ENCODE measurements at regions of chr1 and their contacts with region 1.

Region 1: GRCh38 chr1:28412731-28413130 is 43.2 kb downstream of the PHACTR4 start:
- DNase-seq: no peak
- ATAC-seq: no peak

Region 2: DNA sequence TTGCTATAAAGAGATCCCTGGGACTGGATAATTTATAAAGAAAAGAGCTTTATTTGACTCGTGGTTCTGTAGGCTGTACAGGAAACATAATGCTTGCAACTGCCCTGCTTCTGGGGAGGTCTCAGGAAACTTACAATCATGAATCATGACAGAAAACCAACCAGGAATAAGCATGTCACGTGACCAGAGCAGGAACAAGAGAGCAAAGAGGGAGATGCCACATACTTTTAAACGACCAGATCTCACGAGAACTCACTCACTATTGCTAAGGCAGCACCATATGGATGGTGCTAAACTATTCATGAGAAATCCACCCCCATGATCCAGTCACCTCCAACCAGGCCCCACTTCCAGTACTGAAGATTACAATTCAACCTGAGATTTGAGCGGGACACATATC is 43.3 kb after region 1 on chr1:
- intact Hi-C with region 1: loop called (anchors 5 kb)
- DNase-seq: no peak
- ATAC-seq: no peak

Region 3: GRCh38 chr1:28470146-28470545 is 57.4 kb after region 1 on chr1:
- intact Hi-C with region 1: loop called (anchors 5 kb)
- DNase-seq: no peak
- ATAC-seq: no peak

Region 4: DNA sequence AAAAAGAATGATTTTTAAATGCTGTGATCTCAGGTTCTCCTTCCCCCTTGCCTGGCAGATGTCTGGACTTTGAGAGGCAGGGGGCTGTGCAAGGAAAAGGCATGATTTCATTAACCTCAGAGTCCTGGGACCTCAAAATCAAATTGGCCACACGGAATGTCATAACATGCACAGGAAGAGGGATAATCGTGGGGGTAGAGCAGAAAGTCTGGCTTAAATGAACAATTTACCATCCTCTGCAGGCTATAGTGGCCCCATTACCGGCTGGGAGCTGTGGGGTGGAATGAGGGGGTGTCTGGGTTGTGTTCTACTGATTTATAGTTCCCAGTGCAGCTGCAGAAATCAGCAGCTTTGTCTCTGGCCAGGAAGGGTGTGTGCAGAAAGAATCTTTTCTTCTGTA is 410.1 kb after region 1 on chr1:
- intact Hi-C with region 1: no loop called
- DNase-seq: no peak
- ATAC-seq: no peak

Measured in Right ventricle myocardium inferior (tissue), 1 donor.